ENCODE measurements at regions of chrX and their contacts with region 1.

Region 1: GRCh38 chrX:48891402-48892288 is 5.9 kb downstream of the TIMM17B start:
- DNase-seq: peak; percentile 67
- H3K4me3 ChIP-seq: peak overlapping the region; percentile 52
- H3K27ac ChIP-seq: no peak overlapping the region
- H3K4me1 ChIP-seq: peaks cover 23% of the 10 kb centered on the region
- CTCF ChIP-seq: peak; percentile 66

Region 2: DNA sequence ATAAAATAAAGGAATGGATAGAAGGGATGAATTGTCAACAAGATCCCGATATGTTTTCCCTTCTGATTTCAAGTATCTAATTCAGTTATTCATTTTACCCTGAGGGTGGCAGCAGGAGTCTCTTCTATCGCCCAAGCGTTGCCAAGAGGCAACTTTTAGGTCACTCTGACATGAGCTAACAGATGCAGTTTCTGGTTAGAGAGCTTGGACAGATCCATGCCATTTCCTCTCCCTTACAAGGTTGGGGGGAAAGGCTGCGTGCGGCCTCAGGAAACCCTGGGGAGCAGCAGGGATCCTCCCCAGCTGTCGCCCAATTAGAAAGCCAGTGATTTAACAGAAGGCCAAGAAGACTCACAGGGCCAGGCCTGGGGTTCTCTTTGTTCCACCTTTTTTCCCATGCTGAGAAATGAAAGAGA is 243.3 kb before region 1 on chrX:
- CTCF ChIA-PET with region 1: no interaction called
- POLR2A ChIA-PET with region 1: no interaction called
- intact Hi-C with region 1: loop called (anchors 5 kb)
- DNase-seq: peak; percentile 71
- H3K4me3 ChIP-seq: no peak overlapping the region
- H3K27ac ChIP-seq: no peak overlapping the region
- H3K4me1 ChIP-seq: peaks cover 7% of the 10 kb centered on the region
- CTCF ChIP-seq: peak; percentile 71

Region 3: GRCh38 chrX:48782795-48783194 is 108.8 kb before region 1 on chrX:
- CTCF ChIA-PET with region 1: no interaction called
- POLR2A ChIA-PET with region 1: no interaction called
- intact Hi-C with region 1: no loop called
- DNase-seq: no peak
- H3K4me3 ChIP-seq: no peak overlapping the region
- H3K27ac ChIP-seq: no peak overlapping the region
- H3K4me1 ChIP-seq: no peaks in the 10 kb centered on the region
- CTCF ChIP-seq: no peak

Region 4: DNA sequence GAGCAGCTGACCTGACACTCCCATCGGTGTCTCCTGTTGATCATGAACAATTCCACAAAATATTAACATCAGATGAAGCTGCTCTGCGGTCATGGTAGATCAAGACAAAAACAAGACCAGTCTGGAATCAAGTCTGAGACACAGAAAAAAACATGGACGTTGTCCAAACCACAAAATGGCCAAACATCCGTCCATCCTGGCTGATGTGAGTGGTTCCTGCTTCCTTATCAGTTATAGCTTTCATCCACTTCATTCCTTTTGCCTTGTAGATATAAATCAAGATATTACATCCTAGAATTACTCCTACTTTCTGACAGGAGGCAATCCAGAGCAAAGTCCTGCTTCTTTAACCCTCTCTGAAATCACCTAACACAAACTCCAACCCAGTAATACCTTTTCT is 27.4 kb before region 1 on chrX:
- CTCF ChIA-PET with region 1: no interaction called
- POLR2A ChIA-PET with region 1: no interaction called
- intact Hi-C with region 1: no loop called
- DNase-seq: no peak
- H3K4me3 ChIP-seq: no peak overlapping the region
- H3K27ac ChIP-seq: no peak overlapping the region
- H3K4me1 ChIP-seq: no peaks in the 10 kb centered on the region
- CTCF ChIP-seq: no peak

Region 5: GRCh38 chrX:48989483-48989882 is 97.8 kb after region 1 on chrX:
- CTCF ChIA-PET with region 1: no interaction called
- POLR2A ChIA-PET with region 1: no interaction called
- intact Hi-C with region 1: no loop called
- DNase-seq: no peak
- H3K4me3 ChIP-seq: no peak overlapping the region
- H3K27ac ChIP-seq: no peak overlapping the region
- H3K4me1 ChIP-seq: no peaks in the 10 kb centered on the region
- CTCF ChIP-seq: no peak

Region 6: DNA sequence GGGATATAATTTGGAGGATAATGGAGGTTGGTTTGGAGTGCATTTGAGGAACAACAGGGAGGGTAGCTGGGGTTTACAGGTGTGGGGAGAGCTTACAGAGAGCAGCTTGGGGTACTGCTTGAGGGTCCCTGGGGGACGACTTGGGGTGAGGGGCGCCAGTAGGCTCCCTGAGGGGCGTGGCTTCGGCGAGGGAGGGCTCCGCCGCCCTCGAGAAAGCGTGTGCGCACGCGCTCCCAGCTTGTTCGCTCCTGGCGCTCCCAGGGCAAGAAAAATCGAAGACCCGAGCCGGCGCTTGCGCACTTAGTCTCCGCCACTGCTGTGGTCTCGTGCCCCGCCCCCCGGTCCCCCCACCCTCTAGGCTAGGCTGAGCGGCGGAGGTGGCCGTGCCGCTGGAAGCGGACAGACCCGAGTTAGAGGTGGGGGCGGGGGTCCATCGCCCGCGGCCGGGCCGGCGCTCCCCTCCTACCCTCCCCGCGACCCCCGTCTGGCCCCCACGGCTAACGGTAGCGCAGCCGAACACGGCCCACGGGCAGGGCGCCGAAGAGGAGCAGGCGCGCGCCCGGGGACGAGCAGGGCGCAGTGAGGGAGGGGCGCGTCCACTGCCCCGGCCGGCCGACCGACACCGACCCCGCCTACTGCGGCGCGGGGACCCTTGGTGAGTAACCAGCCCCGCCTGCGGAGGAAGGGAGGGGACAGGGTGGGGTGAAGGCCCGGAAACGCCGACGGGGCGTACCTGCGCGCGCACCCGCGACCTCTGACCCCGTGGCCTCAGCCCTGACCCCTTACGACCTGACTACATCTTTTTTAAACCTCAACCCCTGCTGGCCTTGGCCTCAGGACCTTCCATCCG is 161.8 kb after region 1 on chrX:
- CTCF ChIA-PET with region 1: no interaction called
- POLR2A ChIA-PET with region 1: no interaction called
- intact Hi-C with region 1: no loop called
- DNase-seq: peak; percentile 66
- H3K4me3 ChIP-seq: peak overlapping the region; percentile 68
- H3K27ac ChIP-seq: no peak overlapping the region
- H3K4me1 ChIP-seq: no peaks in the 10 kb centered on the region
- CTCF ChIP-seq: no peak

Measured in OCI-LY7 (cell line).